ENCODE measurements at regions of chr3 and their contacts with region 1.

Region 1: DNA sequence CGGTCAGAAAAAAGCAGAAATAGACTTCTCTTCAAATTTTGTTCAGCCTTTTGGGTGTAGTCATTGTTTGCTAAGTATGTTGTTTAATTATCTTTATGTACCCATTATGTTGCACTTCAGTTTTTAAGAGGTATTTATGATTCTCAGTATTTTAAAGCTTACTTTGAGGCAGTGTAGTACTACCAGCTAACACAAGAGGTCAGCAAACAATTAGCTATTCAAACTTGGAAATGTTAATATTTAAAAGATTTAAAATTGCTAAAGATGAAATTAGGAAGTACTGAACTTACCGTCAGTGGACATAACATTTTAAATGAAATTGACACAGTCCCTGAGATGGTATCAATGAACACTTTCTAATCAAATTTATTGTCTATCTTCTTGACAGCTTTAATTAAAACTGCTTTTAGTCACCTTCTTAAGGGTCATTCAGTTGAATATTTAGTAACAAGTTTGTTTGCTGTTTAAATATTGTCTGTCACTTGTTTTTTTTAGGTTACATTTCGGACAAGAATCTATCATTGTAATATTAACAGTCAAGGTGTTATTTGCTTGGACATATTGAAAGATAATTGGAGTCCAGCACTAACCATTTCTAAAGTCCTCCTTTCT is 28.1 kb downstream of the NKIRAS1 start:
- DNase-seq: peak; percentile 48
- H3K4me3 ChIP-seq: no peak overlapping the region
- H3K27ac ChIP-seq: no peak overlapping the region
- H3K4me1 ChIP-seq: peaks cover 11% of the 10 kb centered on the region
- CTCF ChIP-seq: peak; percentile 98

Region 2: GRCh38 chr3:23916886-23917678 is 28.4 kb after region 1 on chr3 and contains the starts of genes NKIRAS1 and RPL15:
- CTCF ChIA-PET with region 1: no interaction called
- POLR2A ChIA-PET with region 1: interaction called, 12 read pairs
- intact Hi-C with region 1: no loop called
- DNase-seq: peak; percentile 98
- H3K4me3 ChIP-seq: peak within 1 kb of the TSS; percentile 97
- H3K27ac ChIP-seq: peak within 1 kb of the TSS; percentile 64
- H3K4me1 ChIP-seq: peaks cover 45% of the 10 kb centered on the region
- CTCF ChIP-seq: no peak
- total RNA-seq, gene NKIRAS1: 4.0 and 4.1 TPM in 2 replicates
- total RNA-seq, gene RPL15: 2,205 and 2,390 TPM in 2 replicates

Region 3: GRCh38 chr3:24237971-24238767 is 349.4 kb after region 1 on chr3:
- CTCF ChIA-PET with region 1: no interaction called
- POLR2A ChIA-PET with region 1: no interaction called
- intact Hi-C with region 1: loop called (anchors 2 kb)
- DNase-seq: peak; percentile 75
- H3K4me3 ChIP-seq: no peak overlapping the region
- H3K27ac ChIP-seq: no peak overlapping the region
- H3K4me1 ChIP-seq: no peaks in the 10 kb centered on the region
- CTCF ChIP-seq: peak; percentile 84

Measured in OCI-LY7 (cell line).